ENCODE measurements at regions of chr6 and their contacts with region 1.

Region 1: DNA sequence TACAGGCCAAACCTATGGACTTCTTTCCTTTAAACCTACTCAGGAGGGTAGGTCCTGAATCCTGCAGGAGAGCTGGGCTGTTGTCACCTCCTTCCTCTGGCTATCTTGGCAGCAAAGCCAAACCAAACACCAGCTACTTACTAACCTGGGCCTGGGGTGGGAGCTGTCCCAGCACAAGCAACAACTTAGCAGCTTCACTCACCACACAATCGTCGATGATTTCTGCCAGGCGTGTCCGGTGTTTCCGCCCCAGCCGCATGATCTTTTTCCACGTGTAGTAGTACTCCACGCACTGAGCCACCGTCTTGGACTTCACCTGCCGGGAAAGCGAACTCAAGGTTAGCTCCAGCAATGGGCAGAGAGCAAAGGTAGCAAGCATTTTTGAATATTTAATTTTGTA is 25.4 kb upstream of the MRPS10 start:
- DNase-seq: no peak
- H3K4me3 ChIP-seq: no peak overlapping the region
- H3K27ac ChIP-seq: no peak overlapping the region
- H3K4me1 ChIP-seq: peaks cover 0 to 9% (median 4%) of the 10 kb centered on the region in 4 experiments; a peak in 5 of 7 replicates
- H3K27me3 ChIP-seq: no peaks in the 10 kb centered on the region
- CTCF ChIP-seq: no peak
- EP300 ChIP-seq: no peak
- POLR2A ChIP-seq: no peak
- RAD21 ChIP-seq: no peak

Region 2: DNA sequence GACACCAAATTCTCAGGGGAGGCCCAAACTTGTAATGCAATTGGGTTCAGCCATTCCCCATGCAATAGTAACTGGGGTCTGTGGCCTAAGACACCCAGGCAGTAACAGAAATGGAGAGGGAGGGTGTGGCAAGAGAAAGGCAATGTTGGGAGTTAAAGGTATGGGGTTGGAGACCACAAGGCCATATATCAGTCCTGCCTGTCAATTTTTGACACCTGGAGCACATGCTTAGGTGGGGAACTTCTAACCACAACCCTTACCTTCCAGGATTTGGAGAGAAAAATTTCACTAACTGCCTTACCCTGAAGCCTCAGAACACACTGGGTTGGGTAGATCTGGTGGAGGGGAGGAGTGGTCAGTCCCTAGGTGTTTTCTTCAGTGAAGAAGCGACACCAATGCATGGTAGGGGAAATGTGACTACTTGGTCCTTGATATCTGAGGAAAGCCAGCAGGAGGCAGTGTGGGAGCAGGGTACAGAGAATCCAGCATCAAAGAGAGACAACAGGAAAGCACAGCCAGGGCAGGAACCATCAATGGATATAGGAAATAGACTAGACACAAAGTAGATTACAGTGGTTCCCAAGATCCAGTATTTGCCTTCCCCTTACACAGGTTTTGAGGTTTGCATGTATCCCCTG is 341.0 kb before region 1 on chr6:
- CTCF ChIA-PET with region 1: no interaction called
- POLR2A ChIA-PET with region 1: no interaction called
- DNase-seq: peak in 1 of 2 experiments; percentile 53
- H3K4me3 ChIP-seq: no peak overlapping the region
- H3K27ac ChIP-seq: no peak overlapping the region
- H3K4me1 ChIP-seq: no peaks in the 10 kb centered on the region
- H3K27me3 ChIP-seq: no peaks in the 10 kb centered on the region
- CTCF ChIP-seq: peak; percentile 25 to 56 (median 44)
- EP300 ChIP-seq: no peak
- POLR2A ChIP-seq: no peak
- RAD21 ChIP-seq: peak; percentile 49 to 65

Region 3: GRCh38 chr6:42230345-42231321 is 12.4 kb before region 1 on chr6:
- CTCF ChIA-PET with region 1: interaction called, 15 read pairs
- POLR2A ChIA-PET with region 1: interaction called, 4 read pairs
- DNase-seq: no peak
- H3K4me3 ChIP-seq: no peak overlapping the region
- H3K27ac ChIP-seq: no peak overlapping the region
- H3K4me1 ChIP-seq: no peaks in the 10 kb centered on the region
- H3K27me3 ChIP-seq: no peaks in the 10 kb centered on the region
- CTCF ChIP-seq: peak; percentile 2 to 46 (median 45)
- EP300 ChIP-seq: no peak
- POLR2A ChIP-seq: no peak
- RAD21 ChIP-seq: peak; percentile 35 to 50

Measured in H1 (cell line).